Panc1 (cell line): ENCODE measurements at regions of chr6 and their contacts with region 1.

Region 1: GRCh38 chr6:10163200-10163962 is 251.5 kb downstream of the TFAP2A start:
- DNase-seq: no peak
- ATAC-seq: peak; percentile 81
- H3K4me3 ChIP-seq: peak overlapping the region; percentile 1 to 31; a peak in 2 of 4 replicates
- H3K27ac ChIP-seq: peak overlapping the region; percentile 45; the same call in 1 of the 2 replicates
- H3K4me1 ChIP-seq: peaks cover 16% of the 10 kb centered on the region
- H3K27me3 ChIP-seq: no peaks in the 10 kb centered on the region
- CTCF ChIP-seq: no peak

Region 2: DNA sequence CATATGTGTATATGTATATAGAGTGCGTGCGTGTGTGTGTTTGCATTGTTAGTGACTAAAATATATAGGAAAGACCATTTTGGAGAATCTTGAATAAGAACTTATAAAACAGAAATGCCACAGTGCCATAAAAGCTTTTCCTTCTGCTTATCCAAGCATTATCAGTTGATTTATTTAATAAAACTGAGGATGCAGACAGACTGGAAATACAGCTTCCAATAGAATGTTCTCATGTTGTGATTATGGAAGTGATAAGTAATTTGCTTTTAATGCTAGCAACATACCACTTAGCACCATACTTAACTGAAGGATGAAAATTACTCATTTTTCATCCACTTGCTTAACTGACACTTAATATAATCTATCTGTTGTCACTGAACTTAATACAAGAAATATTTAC is 568.6 kb before region 1 on chr6:
- CTCF ChIA-PET with region 1: no interaction called
- POLR2A ChIA-PET with region 1: no interaction called
- in situ Hi-C with region 1: no loop called
- intact Hi-C with region 1: no loop called
- DNase-seq: no peak
- ATAC-seq: no peak
- H3K4me3 ChIP-seq: no peak overlapping the region
- H3K27ac ChIP-seq: no peak overlapping the region
- H3K4me1 ChIP-seq: no peaks in the 10 kb centered on the region
- H3K27me3 ChIP-seq: no peaks in the 10 kb centered on the region
- CTCF ChIP-seq: no peak

Region 3: DNA sequence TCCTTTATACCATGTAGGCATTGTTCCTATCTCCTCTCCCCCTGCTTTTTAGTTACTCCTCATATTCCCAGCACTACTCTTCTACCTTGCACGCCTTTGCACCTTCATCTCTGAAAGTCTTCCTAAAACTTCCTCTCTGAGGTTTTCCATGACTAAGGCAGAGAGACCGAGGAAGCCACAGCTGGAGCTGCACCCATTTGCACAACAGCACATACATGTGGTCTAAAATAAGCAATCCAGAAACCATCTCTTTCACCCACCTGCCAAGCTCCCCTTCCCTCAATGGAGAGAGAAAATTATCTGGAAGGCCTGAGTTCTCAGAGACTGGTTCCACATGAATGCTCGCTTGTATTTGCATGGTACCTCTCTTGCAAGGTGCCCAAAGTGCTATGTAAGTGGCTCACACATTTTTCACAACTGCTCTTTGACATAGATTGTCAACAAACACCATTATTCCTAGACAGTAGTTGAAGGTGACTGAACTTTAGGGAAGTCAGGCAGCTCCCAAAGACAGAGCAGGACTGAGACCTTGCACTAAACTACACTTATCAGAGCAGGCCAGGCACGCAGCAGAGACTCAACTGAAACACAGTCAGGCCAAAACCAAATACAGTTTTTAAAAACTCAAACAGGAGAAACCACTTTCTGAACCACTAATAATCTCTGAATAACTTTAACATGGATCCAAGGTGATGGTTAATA is 61.7 kb before region 1 on chr6:
- CTCF ChIA-PET with region 1: interaction called, 10 read pairs
- POLR2A ChIA-PET with region 1: no interaction called
- in situ Hi-C with region 1: no loop called
- intact Hi-C with region 1: no loop called
- DNase-seq: no peak
- ATAC-seq: no peak
- H3K4me3 ChIP-seq: no peak overlapping the region
- H3K27ac ChIP-seq: peak overlapping the region; percentile 34; the same call in 1 of the 2 replicates
- H3K4me1 ChIP-seq: peaks cover 17% of the 10 kb centered on the region
- H3K27me3 ChIP-seq: no peaks in the 10 kb centered on the region
- CTCF ChIP-seq: no peak